ENCODE measurements at regions of chr7 and their contacts with region 1.

Region 1: GRCh38 chr7:923108-924041 is 31.1 kb downstream of the ADAP1 start:
- DNase-seq: peak; percentile 81
- ATAC-seq: peak; percentile 85
- H3K4me3 ChIP-seq: peak overlapping the region; percentile 72
- H3K27ac ChIP-seq: peak overlapping the region; percentile 99
- H3K4me1 ChIP-seq: peaks cover 49% of the 10 kb centered on the region
- H3K27me3 ChIP-seq: no peaks in the 10 kb centered on the region
- CTCF ChIP-seq: no peak
- EP300 ChIP-seq: peak; percentile 71 to 77; a peak in 3 of 4 replicates
- POLR2A ChIP-seq: peak; percentile 80
- RAD21 ChIP-seq: 0 out of 2 replicates have a peak, but pooled peaks have one; percentile 1

Region 2: GRCh38 chr7:909358-910329 is 13.7 kb before region 1 on chr7:
- CTCF ChIA-PET with region 1: interaction called, 20 read pairs
- POLR2A ChIA-PET with region 1: interaction called, 13 read pairs
- RAD21 ChIA-PET with region 1: interaction called, 15 read pairs
- SMC1A ChIA-PET with region 1: interaction called, 25 read pairs
- in situ Hi-C with region 1: no loop called
- intact Hi-C with region 1: loop called (anchors 2 kb)
- DNase-seq: no peak
- ATAC-seq: peak; percentile 69
- H3K4me3 ChIP-seq: peak overlapping the region; percentile 51; the same call in 1 of the 2 replicates
- H3K27ac ChIP-seq: peak overlapping the region; percentile 38
- H3K4me1 ChIP-seq: peaks cover 16% of the 10 kb centered on the region
- H3K27me3 ChIP-seq: no peaks in the 10 kb centered on the region
- CTCF ChIP-seq: no peak
- EP300 ChIP-seq: no peak
- POLR2A ChIP-seq: no peak
- RAD21 ChIP-seq: no peak

Region 3: DNA sequence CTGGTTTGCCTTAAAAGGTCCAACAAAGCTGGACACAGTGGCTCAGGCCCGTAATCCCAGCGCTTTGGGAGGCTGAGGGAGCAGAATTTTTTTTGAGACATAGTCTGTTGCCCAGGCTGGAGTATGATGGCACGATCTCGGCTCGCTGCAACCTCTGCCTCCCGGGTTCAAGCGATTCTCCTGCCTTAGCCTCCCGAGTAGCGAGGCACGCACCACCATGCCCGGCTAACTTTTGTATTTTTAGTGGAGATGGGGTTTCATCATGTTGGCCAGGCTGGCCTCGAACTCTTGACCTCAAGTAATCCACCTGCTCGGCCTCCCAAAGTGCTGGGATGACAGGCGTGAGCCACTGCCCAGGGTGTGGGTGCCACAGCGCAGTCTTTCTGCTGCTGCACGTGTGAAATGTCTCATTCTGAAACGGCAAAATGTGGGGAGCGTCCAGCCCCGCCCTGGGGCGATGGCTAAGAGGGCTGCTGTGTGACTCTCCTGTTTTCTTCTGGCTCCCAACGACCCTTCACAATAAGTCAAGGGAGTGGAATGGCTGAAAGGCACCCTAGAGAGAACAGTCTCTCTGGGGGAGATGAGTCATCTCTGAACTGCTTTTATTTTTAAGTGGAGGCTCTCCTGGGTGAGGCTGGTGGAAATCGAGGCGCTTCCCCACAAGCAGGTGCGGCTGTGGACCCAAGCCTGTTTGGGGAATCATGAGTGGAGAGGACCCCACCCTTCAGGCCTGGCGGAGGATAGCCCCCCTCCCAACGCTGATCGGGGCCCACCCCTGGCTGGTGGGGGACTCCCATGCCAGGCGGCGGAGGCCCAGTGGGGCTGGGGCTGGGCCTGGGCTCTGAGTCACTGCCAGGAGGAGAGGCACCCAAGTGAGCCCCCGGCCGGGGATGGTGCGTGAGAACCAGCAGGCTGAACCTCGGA is 13.0 kb after region 1 on chr7:
- CTCF ChIA-PET with region 1: no interaction called
- POLR2A ChIA-PET with region 1: interaction called, 3 read pairs
- RAD21 ChIA-PET with region 1: interaction called, 3 read pairs
- SMC1A ChIA-PET with region 1: interaction called, 3 read pairs
- in situ Hi-C with region 1: no loop called
- intact Hi-C with region 1: loop called (anchors 2 kb)
- DNase-seq: peak; percentile 92
- ATAC-seq: peak; percentile 92
- H3K4me3 ChIP-seq: no peak overlapping the region; the same call in 1 of the 2 replicates
- H3K27ac ChIP-seq: peak overlapping the region; percentile 81
- H3K4me1 ChIP-seq: peaks cover 16% of the 10 kb centered on the region
- H3K27me3 ChIP-seq: no peaks in the 10 kb centered on the region
- CTCF ChIP-seq: no peak
- EP300 ChIP-seq: no peak
- POLR2A ChIP-seq: no peak; the same call in 1 of the 2 replicates
- RAD21 ChIP-seq: no peak

Region 4: DNA sequence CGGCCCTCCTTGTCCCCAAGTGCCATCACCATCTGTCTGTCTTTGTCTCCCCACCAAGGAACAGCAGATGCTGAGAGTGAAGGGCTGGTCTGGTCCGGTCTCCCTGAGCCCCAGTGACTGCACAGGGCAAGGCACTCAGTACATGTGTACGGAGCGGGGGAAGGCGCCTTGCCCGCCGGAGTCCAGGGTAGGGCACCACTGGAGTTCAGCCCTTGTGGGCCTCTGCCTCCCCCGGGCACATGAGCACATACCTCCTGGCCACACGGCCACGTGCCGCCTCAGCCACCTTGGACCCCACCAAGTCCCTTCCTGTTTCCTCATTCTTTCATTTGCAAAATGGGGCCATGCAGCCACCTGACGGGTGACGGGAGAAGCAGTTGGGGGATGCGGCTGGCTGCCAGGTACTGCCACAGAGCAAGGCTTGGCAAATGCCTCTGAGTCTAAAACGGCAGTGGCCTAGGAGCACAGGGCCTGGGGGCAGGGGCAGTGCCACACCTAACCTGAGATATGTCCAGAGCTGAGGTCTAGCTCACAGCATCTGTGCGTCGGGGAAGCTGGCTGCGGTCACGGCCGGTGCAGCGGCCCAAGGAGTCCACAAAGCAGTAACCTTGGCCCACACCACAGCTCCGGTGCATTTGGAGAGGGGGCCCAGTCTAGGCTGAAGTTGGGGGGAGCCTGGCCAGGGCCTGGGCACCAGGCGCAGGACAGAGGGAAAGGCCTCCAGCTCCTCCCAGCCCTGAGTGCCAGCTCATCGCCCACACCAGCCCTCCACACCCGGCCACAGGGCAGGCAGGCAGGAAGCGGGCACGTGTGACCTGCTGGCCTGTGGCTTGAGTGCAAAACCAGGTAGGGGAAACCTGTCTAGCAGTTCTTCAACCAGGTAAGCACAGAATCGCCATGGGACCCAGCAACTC is 25.9 kb after region 1 on chr7:
- CTCF ChIA-PET with region 1: interaction called, 4 read pairs
- POLR2A ChIA-PET with region 1: interaction called, 17 read pairs
- RAD21 ChIA-PET with region 1: interaction called, 35 read pairs
- SMC1A ChIA-PET with region 1: interaction called, 12 read pairs
- in situ Hi-C with region 1: no loop called
- intact Hi-C with region 1: loop called (anchors 2 kb)
- DNase-seq: no peak
- ATAC-seq: peak; percentile 51
- H3K4me3 ChIP-seq: 0 out of 2 replicates have a peak overlapping the region, but pooled peaks have one; percentile 2
- H3K27ac ChIP-seq: peak overlapping the region; percentile 67
- H3K4me1 ChIP-seq: peaks cover 24% of the 10 kb centered on the region
- H3K27me3 ChIP-seq: no peaks in the 10 kb centered on the region
- CTCF ChIP-seq: no peak
- EP300 ChIP-seq: no peak
- POLR2A ChIP-seq: no peak
- RAD21 ChIP-seq: no peak

Region 5: DNA sequence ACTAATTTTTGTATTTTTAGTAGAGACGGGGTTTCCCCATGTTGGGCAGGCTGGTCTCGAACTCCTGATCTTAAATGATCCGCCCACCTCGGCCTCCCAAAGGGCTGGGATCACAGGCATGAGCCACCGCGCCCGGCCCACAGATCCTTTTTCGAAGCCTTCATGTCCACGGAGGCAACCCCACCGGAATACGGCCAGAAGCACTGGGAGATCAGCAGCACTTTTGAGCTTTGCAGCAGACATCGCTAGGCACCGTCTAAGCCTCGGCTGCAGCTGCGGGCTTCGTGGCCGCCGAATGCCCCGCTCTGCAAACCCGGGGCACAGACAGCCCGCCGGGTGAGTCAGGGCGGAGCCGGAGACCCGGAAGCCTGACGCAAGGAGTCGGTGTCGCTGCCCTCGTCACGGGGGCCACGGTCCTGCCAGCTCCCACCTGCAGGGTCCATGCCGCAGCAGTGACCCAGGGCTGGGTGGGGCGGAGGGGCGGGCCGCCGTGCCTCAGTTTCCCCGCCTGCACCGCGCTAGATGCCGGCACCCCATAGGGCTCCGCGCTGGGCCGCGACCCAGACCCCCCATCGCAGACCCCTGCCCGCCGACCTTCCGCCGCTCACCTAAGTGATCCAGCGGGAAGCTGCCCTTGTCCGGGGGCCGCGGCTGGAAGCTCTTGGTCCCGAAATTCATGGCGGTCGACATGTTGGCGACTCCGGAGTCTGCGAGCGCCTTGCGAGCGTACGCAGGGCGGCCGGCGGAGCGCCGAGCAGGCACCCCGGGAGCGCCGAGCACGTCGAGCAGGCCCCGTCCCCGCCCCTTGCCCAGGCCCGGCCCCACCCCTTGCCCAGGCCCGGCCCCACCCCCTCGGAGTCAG is 51.7 kb after region 1 on chr7 and contains the start of gene COX19:
- CTCF ChIA-PET with region 1: interaction called, 5 read pairs
- POLR2A ChIA-PET with region 1: interaction called, 8 read pairs
- RAD21 ChIA-PET with region 1: interaction called, 14 read pairs
- SMC1A ChIA-PET with region 1: interaction called, 3 read pairs
- in situ Hi-C with region 1: no loop called
- intact Hi-C with region 1: no loop called
- DNase-seq: peak; percentile 42
- ATAC-seq: peak; percentile 87
- H3K4me3 ChIP-seq: peak within 1 kb of the TSS; percentile 78
- H3K27ac ChIP-seq: peak within 1 kb of the TSS; percentile 86
- H3K4me1 ChIP-seq: no peaks in the 10 kb centered on the region
- H3K27me3 ChIP-seq: no peaks in the 10 kb centered on the region
- CTCF ChIP-seq: no peak
- EP300 ChIP-seq: no peak
- POLR2A ChIP-seq: peak; percentile 94
- RAD21 ChIP-seq: no peak
- polyA plus RNA-seq, gene COX19: 3.7 to 6.6 TPM

Region 6: DNA sequence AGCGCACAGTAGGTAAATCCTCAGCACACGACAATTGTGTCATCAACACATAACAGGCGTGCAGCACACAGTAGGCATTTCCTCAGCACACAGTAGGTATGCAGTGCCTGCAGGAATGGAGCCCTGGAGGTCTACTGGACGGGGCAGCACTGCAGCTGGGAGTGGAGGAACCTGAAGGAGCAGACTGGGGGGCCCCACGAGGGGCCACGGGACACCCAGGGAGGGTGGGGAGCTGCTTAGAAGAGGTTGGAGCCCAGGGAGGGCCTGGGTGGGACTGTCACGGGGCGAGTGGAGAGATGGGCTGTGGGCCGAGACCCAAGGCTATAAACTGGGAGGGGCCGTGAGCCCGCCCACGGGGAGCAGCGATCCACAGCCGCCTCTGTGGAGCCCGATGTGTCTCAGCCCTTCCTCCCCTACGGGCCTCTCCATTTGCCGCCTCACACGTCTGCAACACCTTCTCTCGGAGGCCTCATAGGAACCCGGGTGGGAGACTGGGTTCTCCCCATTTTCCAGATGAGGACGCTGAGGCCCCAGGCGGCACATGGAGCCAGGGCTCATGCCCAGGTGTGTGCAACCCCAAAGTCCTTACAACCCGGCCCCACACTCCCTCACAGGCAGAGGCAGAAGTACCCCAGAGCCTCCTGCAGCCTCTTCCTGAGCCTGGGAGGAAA is 434.4 kb after region 1 on chr7:
- CTCF ChIA-PET with region 1: no interaction called
- POLR2A ChIA-PET with region 1: no interaction called
- RAD21 ChIA-PET with region 1: no interaction called
- SMC1A ChIA-PET with region 1: no interaction called
- in situ Hi-C with region 1: no loop called
- intact Hi-C with region 1: no loop called
- DNase-seq: no peak
- ATAC-seq: peak; percentile 41
- H3K4me3 ChIP-seq: no peak overlapping the region
- H3K27ac ChIP-seq: no peak overlapping the region
- H3K4me1 ChIP-seq: no peaks in the 10 kb centered on the region
- H3K27me3 ChIP-seq: no peaks in the 10 kb centered on the region
- CTCF ChIP-seq: no peak
- EP300 ChIP-seq: no peak
- POLR2A ChIP-seq: no peak
- RAD21 ChIP-seq: no peak